ENCODE measurements at regions of chr3 and their contacts with region 1.

Region 1: DNA sequence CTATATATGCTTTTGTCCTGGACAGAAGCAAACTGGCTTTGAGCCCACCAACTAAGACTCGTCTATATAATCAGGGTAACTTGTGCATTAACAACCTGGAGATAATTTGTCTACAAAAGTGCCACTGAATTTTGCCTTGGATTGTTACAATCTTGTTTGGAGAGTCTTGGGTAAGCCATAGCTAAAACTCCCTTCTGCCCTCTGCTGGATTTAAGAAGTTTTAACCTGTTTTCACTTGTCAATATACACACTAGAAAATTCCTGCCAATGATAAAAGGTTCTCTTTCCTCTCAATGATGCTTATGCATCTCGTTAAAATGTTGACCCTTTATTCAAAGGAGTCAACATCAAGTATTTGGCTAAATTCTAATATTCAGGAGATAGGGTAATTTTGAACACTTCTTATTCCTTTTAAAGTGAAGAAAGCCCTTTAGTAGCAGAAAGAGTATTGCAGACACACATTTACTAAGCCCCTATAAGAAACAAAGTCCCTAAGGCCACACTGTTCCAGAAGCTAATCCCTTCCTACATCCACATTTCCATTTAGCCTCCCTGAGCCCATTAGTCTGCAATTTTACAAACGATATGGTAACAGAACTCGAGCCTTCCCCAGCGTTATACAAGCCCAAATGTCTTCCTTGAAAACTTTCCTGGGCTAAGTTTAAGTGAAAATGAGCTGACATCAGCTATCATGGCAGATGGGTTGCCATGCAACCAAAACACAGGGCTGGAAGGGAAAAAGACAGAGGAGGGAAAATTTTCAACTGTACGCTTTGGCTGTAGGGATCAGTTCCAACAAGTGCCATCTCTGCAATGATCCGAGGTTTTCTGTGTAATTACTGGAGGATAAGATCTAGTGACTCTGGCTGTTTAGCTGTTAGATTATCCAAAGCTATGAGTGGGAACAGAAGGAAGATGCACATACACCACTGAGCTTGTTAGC is 75.9 kb upstream of the FGF12 start:
- DNase-seq: no peak
- ATAC-seq: peak; percentile 83
- H3K4me3 ChIP-seq: no peak overlapping the region
- H3K27ac ChIP-seq: no peak overlapping the region
- H3K4me1 ChIP-seq: no peaks in the 10 kb centered on the region
- H3K27me3 ChIP-seq: no peaks in the 10 kb centered on the region
- CTCF ChIP-seq: peak; percentile 76; the same call in 1 of the 2 replicates

Region 2: DNA sequence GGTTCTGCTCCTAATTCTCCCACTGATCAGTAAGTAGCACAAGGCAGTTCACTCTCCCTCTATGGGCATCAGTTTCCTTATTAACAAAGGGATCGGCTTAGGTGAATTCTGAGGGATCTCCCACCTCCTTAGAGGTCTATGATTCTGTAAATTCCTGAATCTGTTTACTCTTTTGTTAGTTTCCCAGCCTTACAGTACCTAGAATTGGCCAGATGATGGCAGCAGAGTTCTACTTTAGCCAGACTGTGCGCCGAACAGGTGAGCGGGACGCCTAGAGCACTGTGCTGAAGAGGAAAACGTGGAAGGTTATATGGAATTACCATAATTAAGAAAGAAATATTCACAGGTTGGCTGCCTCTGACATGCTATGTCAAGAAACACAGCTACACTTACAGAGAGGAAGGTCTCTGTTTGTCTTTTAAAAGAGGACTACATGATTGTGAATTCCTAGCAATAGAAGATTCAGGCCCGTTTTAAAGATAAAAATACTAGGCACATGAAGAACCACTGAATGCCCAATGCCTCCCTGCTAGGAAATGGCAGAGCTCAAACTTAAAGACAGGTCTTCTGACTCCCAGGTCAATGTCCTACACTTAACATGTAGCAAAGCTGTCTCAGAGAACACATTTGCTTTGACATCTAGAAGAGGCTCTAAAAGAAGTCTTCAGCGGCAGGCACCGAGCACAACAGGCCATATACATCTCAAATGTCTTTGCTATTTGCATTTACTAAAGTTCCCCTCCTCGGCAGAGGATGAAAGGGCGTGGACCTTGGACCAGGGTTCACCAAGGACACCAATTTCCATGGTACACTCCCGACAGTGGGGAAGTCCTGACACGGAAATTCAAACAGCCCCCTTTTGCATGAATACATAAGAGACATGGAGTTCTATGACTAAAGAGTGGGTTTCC is 335.7 kb before region 1 on chr3:
- CTCF ChIA-PET with region 1: no interaction called
- POLR2A ChIA-PET with region 1: no interaction called
- in situ Hi-C with region 1: no loop called
- intact Hi-C with region 1: loop called (anchors 2 kb)
- DNase-seq: peak; percentile 33
- ATAC-seq: peak; percentile 91
- H3K4me3 ChIP-seq: no peak overlapping the region
- H3K27ac ChIP-seq: no peak overlapping the region
- H3K4me1 ChIP-seq: peaks cover 3% of the 10 kb centered on the region; the same call in 1 of the 2 replicates
- H3K27me3 ChIP-seq: peaks cover 20% of the 10 kb centered on the region
- CTCF ChIP-seq: peak; percentile 92

Region 3: DNA sequence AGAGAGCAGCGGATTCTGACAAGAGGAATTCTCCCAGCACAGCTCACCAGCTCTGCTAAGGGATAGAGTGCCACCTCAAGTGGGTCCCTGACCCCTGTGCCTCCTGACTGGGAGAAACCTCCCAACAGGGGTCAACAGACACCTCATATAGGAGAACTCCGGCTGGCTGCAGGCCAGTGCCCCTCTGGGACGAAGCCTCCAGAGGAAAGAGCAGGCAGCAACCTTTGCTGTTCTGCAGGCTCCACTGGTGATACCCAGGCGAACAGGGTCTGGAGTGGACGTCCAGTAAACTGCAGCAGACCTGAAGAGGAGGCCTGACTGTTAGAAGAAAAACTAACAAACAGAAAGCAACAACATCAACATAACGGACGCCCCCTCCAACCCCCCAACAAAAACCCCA is 44.6 kb before region 1 on chr3:
- CTCF ChIA-PET with region 1: no interaction called
- POLR2A ChIA-PET with region 1: no interaction called
- in situ Hi-C with region 1: no loop called
- intact Hi-C with region 1: no loop called
- DNase-seq: no peak
- ATAC-seq: no peak
- H3K4me3 ChIP-seq: no peak overlapping the region
- H3K27ac ChIP-seq: no peak overlapping the region
- H3K4me1 ChIP-seq: no peaks in the 10 kb centered on the region
- H3K27me3 ChIP-seq: no peaks in the 10 kb centered on the region
- CTCF ChIP-seq: no peak

Measured in Panc1 (cell line).